A549 (cell line): ENCODE measurements at regions of chr9 and their contacts with region 1.

Region 1: GRCh38 chr9:36023260-36024048 is 13.3 kb upstream of the RECK start:
- DNase-seq: peak; percentile 60 to 74
- ATAC-seq: peak; percentile 86 to 97
- H3K4me3 ChIP-seq: no peak overlapping the region
- H3K27ac ChIP-seq: no peak overlapping the region
- H3K4me1 ChIP-seq: no peaks in the 10 kb centered on the region
- CTCF ChIP-seq: peak; percentile 93
- EP300 ChIP-seq: no peak
- POLR2A ChIP-seq: no peak
- RAD21 ChIP-seq: peak; percentile 82 to 86

Region 2: GRCh38 chr9:36036780-36037548 is 13.5 kb after region 1 on chr9 and contains the start of gene RECK:
- CTCF ChIA-PET with region 1: interaction called, 10 read pairs
- POLR2A ChIA-PET with region 1: interaction called, 3 read pairs
- DNase-seq: peak; percentile 62 to 85
- ATAC-seq: peak; percentile 93 to 94
- H3K4me3 ChIP-seq: peak within 1 kb of the TSS; percentile 79
- H3K27ac ChIP-seq: peak within 1 kb of the TSS; percentile 74 to 93
- H3K4me1 ChIP-seq: peaks cover 27% of the 10 kb centered on the region
- CTCF ChIP-seq: no peak
- EP300 ChIP-seq: no peak
- POLR2A ChIP-seq: peak; percentile 62
- RAD21 ChIP-seq: no peak
- polyA plus RNA-seq, gene RECK: 8.3 and 8.7 TPM in 2 replicates

Region 3: DNA sequence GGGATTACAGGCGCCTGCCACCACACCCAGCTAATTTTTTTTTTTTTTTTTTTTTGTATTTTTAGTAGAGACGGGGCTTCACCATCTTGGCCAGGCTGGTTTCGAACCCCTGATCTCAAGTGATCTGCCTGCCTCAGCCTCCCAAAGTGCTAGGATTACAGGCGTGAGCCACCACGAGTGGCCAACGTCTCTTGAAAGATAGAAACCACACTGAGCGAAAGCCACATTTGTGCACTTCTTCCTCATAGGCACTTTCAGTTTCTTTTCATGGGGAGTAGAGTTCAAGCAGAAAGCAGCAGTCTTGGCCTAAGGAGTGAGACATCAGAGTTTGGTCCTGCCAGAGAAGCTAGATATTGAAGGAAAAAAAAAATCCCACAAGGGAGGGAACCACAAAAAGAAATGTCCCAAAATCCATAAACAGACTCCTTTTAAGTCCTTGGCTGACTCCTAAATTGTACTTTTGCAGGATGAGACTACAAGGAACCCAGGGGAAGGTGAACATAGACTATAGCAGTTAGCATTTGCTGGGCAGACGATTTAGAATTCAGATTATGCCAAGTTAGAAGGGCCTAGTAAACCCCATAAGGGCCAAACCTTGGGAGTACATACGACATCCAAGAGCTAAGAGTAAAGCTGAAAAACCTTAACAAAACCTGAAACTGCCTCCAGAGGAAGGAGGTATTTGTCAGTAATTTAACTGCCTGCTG is 69.2 kb after region 1 on chr9:
- CTCF ChIA-PET with region 1: no interaction called
- POLR2A ChIA-PET with region 1: no interaction called
- DNase-seq: no peak
- ATAC-seq: no peak
- H3K4me3 ChIP-seq: no peak overlapping the region
- H3K27ac ChIP-seq: peak overlapping the region in 1 of 2 experiments; percentile 72; a peak in 2 of 6 replicates
- H3K4me1 ChIP-seq: peaks cover 31% of the 10 kb centered on the region; the same call in 2 of the 3 replicates
- CTCF ChIP-seq: no peak
- EP300 ChIP-seq: no peak
- POLR2A ChIP-seq: no peak
- RAD21 ChIP-seq: no peak

Region 4: DNA sequence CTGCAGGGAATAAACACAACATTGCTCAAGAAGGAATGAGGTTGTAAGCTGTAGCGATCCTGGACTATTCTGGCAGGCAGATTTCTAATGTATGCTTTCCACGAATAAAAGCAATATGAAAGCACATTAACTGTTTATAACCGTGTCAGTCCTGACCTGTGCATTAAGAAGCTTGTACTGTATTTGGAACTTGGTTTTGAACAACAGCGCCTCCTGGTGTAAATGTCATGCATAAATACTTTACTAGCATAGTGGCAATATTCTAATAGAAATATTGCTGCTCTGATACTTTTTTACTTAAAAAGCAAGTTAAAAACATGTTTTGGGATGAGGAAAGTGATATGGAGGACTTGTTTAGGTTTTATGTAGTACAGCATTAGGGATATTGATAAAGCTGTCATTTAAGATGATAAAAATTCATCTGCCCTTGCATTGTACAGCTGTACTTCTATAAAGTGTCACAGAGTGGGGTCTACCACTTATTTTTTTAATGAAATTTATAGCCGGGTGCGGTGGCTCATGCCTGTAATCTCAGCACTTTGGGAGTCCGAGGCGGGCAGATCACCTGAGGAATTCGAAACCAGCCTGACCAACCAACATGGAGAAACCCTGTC is 305.5 kb after region 1 on chr9:
- CTCF ChIA-PET with region 1: no interaction called
- POLR2A ChIA-PET with region 1: no interaction called
- DNase-seq: peak; percentile 72 to 82
- ATAC-seq: peak; percentile 78 to 83; a peak in 5 of 6 replicates
- H3K4me3 ChIP-seq: no peak overlapping the region
- H3K27ac ChIP-seq: peak overlapping the region; percentile 63 to 72
- H3K4me1 ChIP-seq: peaks cover 12% of the 10 kb centered on the region
- CTCF ChIP-seq: peak; percentile 95
- EP300 ChIP-seq: no peak
- POLR2A ChIP-seq: no peak
- RAD21 ChIP-seq: peak; percentile 94 to 95